Dendritic cell treated with granulocyte-macrophage colony-stimulating factor and Interleukin-4, amounts not matched to agents 40 ng/mL and 50 ng/mL, for 4 days (primary cell): ENCODE measurements at regions of chr1 and their contacts with region 1.

Region 1: DNA sequence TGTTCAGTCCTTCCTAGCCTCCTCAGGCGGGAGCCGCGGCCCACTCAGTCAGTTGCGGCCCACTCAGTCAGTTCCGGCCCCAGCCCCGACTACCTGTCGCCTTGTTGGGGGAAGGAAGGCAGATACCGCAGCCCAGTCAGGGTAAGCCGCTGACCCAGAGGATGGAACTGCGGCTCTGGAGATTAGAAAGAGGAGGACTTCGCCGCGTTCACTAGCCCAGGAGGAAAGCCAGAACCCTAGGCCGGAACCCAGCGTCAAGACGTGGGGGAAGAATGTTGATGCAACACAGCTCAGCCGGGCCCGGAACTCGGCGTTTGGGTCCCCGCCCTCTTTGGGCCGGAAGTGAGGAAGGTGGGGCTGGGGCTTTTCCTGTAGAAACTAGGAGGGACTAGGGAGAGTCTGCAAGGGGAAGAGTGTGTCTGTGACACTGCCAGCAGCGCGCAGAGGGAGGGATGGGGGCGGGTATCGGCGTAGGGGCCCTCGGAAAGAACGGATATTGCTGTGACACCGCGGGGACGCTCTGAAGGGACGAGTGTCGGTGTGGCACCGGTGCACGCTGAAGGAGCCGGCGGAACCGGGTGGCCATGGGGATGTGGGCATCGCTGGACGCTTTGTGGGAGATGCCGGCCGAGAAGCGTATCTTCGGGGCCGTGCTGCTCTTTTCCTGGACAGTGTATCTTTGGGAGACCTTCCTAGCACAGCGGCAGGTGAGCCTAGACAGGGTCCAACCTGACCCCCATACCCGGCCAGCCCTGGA is at the start of gene ZMPSTE24:
- H3K4me3 Mint-ChIP-seq: peak within 1 kb of the TSS; percentile 97
- H3K27ac Mint-ChIP-seq: peak within 1 kb of the TSS; percentile 99
- H3K4me1 Mint-ChIP-seq: peaks cover 6% of the 10 kb centered on the region
- H3K27me3 Mint-ChIP-seq: no peaks in the 10 kb centered on the region

Region 2: DNA sequence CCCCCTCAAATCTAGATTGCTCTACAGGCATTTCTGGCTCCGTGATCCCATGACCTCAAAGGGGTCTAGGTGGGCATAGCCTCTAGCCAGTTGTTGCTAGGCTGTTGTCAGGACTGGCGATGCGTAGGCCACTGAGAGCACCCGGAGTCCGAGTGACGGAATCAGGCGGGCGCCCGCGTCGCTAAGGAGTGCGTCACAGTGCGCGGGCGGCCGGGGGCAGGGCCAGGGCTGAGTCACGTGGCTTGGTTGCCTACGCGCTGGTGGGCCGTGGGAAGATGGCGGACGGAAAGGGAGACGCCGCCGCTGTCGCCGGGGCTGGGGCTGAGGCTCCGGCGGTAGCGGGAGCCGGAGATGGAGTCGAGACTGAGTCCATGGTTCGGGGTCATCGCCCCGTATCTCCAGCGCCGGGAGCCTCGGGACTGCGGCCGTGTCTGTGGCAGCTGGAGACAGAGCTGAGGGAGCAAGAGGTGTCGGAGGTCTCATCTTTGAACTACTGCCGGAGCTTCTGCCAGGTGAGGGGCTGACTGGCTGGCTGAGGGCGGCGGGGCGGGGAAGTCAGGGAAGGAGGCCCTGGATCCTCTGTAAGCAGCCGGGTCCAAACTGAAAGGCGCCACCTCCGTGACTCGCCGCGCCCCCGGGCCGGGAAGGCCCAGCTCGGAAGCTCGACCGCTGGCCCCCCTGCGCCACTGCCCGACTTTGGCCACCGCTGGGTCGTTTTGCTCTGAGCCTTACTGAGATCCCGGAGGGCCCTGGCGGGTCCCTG is 96.6 kb before region 1 on chr1 and contains the start of gene RLF:
- intact Hi-C with region 1: loop called (anchors 5 kb)
- H3K4me3 Mint-ChIP-seq: no peak within 1 kb of the TSS
- H3K27ac Mint-ChIP-seq: no peak within 1 kb of the TSS
- H3K4me1 Mint-ChIP-seq: peaks cover 11% of the 10 kb centered on the region
- H3K27me3 Mint-ChIP-seq: peaks cover 2% of the 10 kb centered on the region

Region 3: GRCh38 chr1:40241362-40241761 is 16.5 kb before region 1 on chr1:
- intact Hi-C with region 1: loop called (anchors 1 kb)
- H3K4me3 Mint-ChIP-seq: peak overlapping the region; percentile 47
- H3K27ac Mint-ChIP-seq: peak overlapping the region; percentile 71
- H3K4me1 Mint-ChIP-seq: peaks cover 12% of the 10 kb centered on the region
- H3K27me3 Mint-ChIP-seq: peaks cover 1% of the 10 kb centered on the region

Region 4: GRCh38 chr1:40270152-40270834 is 12.4 kb after region 1 on chr1:
- intact Hi-C with region 1: no loop called
- H3K4me3 Mint-ChIP-seq: no peak overlapping the region
- H3K27ac Mint-ChIP-seq: peak overlapping the region; percentile 2
- H3K4me1 Mint-ChIP-seq: peaks cover 15% of the 10 kb centered on the region
- H3K27me3 Mint-ChIP-seq: no peaks in the 10 kb centered on the region

Region 5: DNA sequence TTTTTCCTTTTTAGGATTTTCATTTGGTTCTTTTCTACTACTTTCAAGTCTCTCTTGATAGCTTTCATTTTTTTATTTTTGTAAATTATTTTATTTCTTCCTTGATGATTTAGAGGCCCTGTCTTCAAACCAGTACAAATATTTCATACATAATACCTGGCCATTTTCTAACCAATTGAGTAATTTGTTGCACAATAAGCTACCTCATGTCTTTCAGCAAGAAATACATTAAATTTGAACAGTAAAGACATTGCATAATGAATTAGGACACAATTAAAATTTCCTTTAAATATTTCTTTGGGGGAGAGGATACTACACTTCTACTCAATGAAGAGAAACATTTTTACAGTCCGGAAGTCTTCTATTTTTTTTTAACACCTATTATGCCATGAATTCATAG is 74.8 kb after region 1 on chr1:
- intact Hi-C with region 1: no loop called
- H3K4me3 Mint-ChIP-seq: no peak overlapping the region
- H3K27ac Mint-ChIP-seq: no peak overlapping the region
- H3K4me1 Mint-ChIP-seq: peaks cover 6% of the 10 kb centered on the region
- H3K27me3 Mint-ChIP-seq: no peaks in the 10 kb centered on the region

Region 6: GRCh38 chr1:40531381-40532061 is 273.7 kb after region 1 on chr1 and contains the start of gene ZNF684:
- intact Hi-C with region 1: loop called (anchors 5 kb)
- H3K4me3 Mint-ChIP-seq: peak within 1 kb of the TSS; percentile 96
- H3K27ac Mint-ChIP-seq: peak within 1 kb of the TSS; percentile 92
- H3K4me1 Mint-ChIP-seq: peaks cover 19% of the 10 kb centered on the region
- H3K27me3 Mint-ChIP-seq: no peaks in the 10 kb centered on the region